ENCODE measurements at regions of chr9 and their contacts with region 1.

Region 1: GRCh38 chr9:84615181-84615943 is 54.2 kb upstream of the NTRK2 start:
- DNase-seq: peak in 1 of 3 donors; percentile 11
- H3K4me3 ChIP-seq: no peak overlapping the region
- H3K4me3 Mint-ChIP-seq: no peak overlapping the region
- H3K27ac ChIP-seq: no peak overlapping the region
- H3K27ac Mint-ChIP-seq: no peak overlapping the region
- H3K4me1 ChIP-seq: no peaks in the 10 kb centered on the region
- H3K4me1 Mint-ChIP-seq: peaks cover 4% of the 10 kb centered on the region
- H3K27me3 ChIP-seq: no peaks in the 10 kb centered on the region
- H3K27me3 Mint-ChIP-seq: peaks cover 0 to 2% (median 0%) of the 10 kb centered on the region in 3 donors
- CTCF ChIP-seq: no peak

Region 2: GRCh38 chr9:84573083-84573482 is 42.3 kb before region 1 on chr9:
- intact Hi-C with region 1: no loop called
- DNase-seq: no peak
- H3K4me3 ChIP-seq: no peak overlapping the region
- H3K4me3 Mint-ChIP-seq: no peak overlapping the region
- H3K27ac ChIP-seq: no peak overlapping the region
- H3K27ac Mint-ChIP-seq: no peak overlapping the region
- H3K4me1 ChIP-seq: no peaks in the 10 kb centered on the region
- H3K4me1 Mint-ChIP-seq: no peaks in the 10 kb centered on the region
- H3K27me3 ChIP-seq: no peaks in the 10 kb centered on the region
- H3K27me3 Mint-ChIP-seq: peaks cover 0 to 3% (median 0%) of the 10 kb centered on the region in 3 donors
- CTCF ChIP-seq: no peak

Region 3: GRCh38 chr9:84669288-84670137 is 54.2 kb after region 1 on chr9 and contains the start of gene NTRK2:
- intact Hi-C with region 1: loop called in 1 of 2 experiments (anchors 10 kb)
- DNase-seq: no peak
- H3K4me3 ChIP-seq: peak within 1 kb of the TSS in 1 of 3 experiments; percentile 39
- H3K4me3 Mint-ChIP-seq: peak within 1 kb of the TSS; percentile 47 to 86
- H3K27ac ChIP-seq: no peak within 1 kb of the TSS
- H3K27ac Mint-ChIP-seq: no peak within 1 kb of the TSS
- H3K4me1 ChIP-seq: peaks cover 0 to 2% of the 10 kb centered on the region in 2 donors
- H3K4me1 Mint-ChIP-seq: peaks cover 13% of the 10 kb centered on the region
- H3K27me3 ChIP-seq: peaks cover 39 to 80% of the 10 kb centered on the region in 2 donors
- H3K27me3 Mint-ChIP-seq: peaks cover 57 to 69% (median 58%) of the 10 kb centered on the region in 3 donors
- CTCF ChIP-seq: no peak
- polyA plus RNA-seq, gene NTRK2: not detected

Region 4: GRCh38 chr9:84761137-84761810 is 145.9 kb after region 1 on chr9:
- intact Hi-C with region 1: no loop called
- DNase-seq: no peak
- H3K4me3 ChIP-seq: no peak overlapping the region
- H3K4me3 Mint-ChIP-seq: no peak overlapping the region
- H3K27ac ChIP-seq: no peak overlapping the region
- H3K27ac Mint-ChIP-seq: no peak overlapping the region
- H3K4me1 ChIP-seq: no peaks in the 10 kb centered on the region
- H3K4me1 Mint-ChIP-seq: no peaks in the 10 kb centered on the region
- H3K27me3 ChIP-seq: no peaks in the 10 kb centered on the region
- H3K27me3 Mint-ChIP-seq: peaks cover 0 to 2% (median 2%) of the 10 kb centered on the region in 3 donors
- CTCF ChIP-seq: no peak